Gastrocnemius medialis (tissue), 4 donors: ENCODE measurements at regions of chr9 and their contacts with region 1.

Region 1: GRCh38 chr9:37592108-37592951 is at the start of gene TOMM5:
- DNase-seq: peak; percentile 92
- ATAC-seq: peak; percentile 92 to 95
- H3K4me3 ChIP-seq: peak within 1 kb of the TSS; percentile 88 to 98 (median 92)
- H3K27ac ChIP-seq: peak within 1 kb of the TSS; percentile 89 to 94 (median 92)
- H3K4me1 ChIP-seq: peaks cover 22 to 29% of the 10 kb centered on the region in 2 donors
- H3K27me3 ChIP-seq: no peaks in the 10 kb centered on the region
- CTCF ChIP-seq: peak in 1 of 5 experiments; percentile 26
- POLR2A ChIP-seq: peak; percentile 88 to 95
- total RNA-seq, gene TOMM5: 75.3 to 137 (median 93.3) TPM

Region 2: DNA sequence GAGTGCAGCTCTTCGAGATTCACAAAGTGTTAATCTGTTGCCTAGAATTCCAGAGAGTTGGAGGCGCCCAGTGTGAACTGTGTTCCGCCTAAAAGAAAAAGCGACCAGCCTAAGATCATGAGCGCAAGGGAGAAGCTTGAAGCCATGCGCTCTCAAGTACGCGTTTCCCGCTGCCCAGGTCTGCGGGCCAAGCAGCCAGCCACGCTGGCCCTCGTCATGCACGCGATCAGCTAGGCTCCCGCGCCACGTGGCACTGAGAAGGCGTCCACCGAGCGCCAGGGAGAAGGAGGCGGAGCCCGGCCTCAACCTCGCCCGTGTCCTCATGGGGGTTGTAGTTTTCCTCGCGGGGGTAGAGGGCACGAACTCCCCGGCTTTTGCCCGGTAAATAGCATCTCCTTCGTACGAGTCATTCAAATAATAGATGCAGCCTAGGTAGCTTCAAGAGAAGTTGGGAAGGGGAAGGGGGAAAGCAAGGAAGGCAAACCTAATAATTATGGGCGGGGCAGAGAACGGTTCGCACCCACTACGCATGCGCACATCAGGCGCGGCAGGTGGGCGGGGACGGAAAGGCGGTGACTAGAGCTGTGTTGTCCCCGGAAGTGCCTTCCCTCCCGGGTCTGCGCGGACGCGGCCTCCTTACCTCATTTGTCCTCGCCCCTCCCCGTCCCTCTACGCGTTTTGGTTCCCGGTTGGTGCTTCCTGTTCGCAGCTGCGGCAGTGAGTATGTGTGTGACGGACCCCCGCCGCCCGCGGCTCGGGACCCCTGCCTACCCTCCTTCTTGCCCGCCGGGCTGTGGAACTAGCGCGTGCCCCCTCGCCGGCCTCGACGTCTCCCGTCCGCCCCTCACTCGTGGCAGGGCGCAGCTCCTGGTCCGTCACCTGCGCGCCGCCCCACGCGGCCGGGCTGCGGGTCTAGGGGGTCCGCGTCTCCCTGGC is 472.2 kb before region 1 on chr9 and contains the start of gene ZCCHC7:
- in situ Hi-C with region 1: loop called in 1 of 4 experiments (anchors 25 kb)
- intact Hi-C with region 1: no loop called
- DNase-seq: peak; percentile 93 to 94
- ATAC-seq: peak; percentile 96 to 97
- H3K4me3 ChIP-seq: peak within 1 kb of the TSS; percentile 89 to 100 (median 96)
- H3K27ac ChIP-seq: peak within 1 kb of the TSS; percentile 91 to 98 (median 97)
- H3K4me1 ChIP-seq: peaks cover 17 to 19% of the 10 kb centered on the region in 2 donors
- H3K27me3 ChIP-seq: no peaks in the 10 kb centered on the region
- CTCF ChIP-seq: no peak
- POLR2A ChIP-seq: peak; percentile 85 to 88
- total RNA-seq, gene ZCCHC7: 4.8 to 11.2 (median 6.9) TPM

Region 3: DNA sequence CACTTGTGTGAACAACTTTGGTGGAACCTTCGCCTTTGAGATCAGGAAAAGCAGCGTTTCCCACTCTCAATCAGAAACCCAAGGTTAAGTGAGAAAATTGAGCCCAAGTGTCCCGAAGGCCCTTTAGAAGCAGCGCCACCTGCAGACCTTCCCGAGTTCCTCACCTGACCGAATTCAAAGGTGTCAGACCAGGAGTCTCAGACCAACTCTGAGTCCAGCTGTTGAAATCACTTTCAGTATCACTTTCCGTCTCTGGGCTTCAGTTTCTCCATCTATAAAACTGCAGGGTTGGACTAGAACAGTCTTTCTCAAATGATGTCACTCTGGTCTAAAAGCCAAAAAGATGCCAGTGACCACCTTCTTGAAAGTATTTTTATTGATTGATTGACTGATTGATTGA is 201.6 kb before region 1 on chr9:
- in situ Hi-C with region 1: no loop called
- intact Hi-C with region 1: no loop called
- DNase-seq: no peak
- ATAC-seq: no peak
- H3K4me3 ChIP-seq: no peak overlapping the region
- H3K27ac ChIP-seq: no peak overlapping the region
- H3K4me1 ChIP-seq: no peaks in the 10 kb centered on the region
- H3K27me3 ChIP-seq: no peaks in the 10 kb centered on the region
- CTCF ChIP-seq: no peak
- POLR2A ChIP-seq: no peak

Region 4: DNA sequence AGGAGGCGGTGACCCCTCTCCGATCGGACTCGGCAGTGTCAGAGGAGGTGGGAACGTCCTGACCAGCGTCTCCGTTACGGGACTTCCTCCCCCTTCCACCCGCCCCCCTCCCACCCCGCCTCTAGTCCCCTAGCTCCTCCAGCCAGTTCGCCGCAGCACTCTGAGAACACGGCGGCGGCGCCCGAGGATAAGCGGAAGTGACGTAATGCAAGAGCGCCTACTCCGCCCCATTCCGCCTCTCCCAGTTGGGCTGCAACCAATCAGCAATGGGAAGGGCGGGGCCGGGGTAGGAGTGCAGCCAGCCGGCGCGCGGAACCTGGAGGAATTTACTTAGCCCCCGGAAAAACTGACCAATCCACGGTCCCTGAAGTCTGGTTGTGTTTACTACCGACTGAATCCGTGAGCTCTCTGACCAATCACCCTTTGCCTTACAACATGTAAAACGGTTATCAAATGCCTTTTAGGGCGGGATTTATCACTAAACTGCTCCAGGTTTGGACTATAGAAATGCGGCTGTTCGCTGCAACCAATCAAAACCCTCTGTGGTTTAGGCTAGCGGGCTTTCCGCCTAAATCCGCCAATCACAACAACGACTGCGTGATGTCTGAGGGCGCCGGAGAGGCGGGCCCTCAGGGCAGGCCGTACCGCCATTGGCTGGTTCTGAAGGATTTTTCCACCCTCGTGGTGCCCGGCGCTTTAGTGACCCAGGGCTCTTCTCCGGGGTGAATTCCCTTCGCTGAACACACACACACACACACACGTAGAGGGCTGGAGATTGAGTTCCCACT is 126.9 kb before region 1 on chr9 and contains the start of gene ZBTB5:
- in situ Hi-C with region 1: loop called in 2 of 4 experiments (anchors 10 kb)
- intact Hi-C with region 1: no loop called
- DNase-seq: peak; percentile 99
- ATAC-seq: peak; percentile 92 to 94
- H3K4me3 ChIP-seq: peak within 1 kb of the TSS; percentile 70 to 92 (median 90)
- H3K27ac ChIP-seq: peak within 1 kb of the TSS; percentile 91 to 100 (median 97)
- H3K4me1 ChIP-seq: peaks cover 26 to 27% of the 10 kb centered on the region in 2 donors
- H3K27me3 ChIP-seq: no peaks in the 10 kb centered on the region
- CTCF ChIP-seq: peak in 1 of 5 experiments; percentile 16
- POLR2A ChIP-seq: peak; percentile 84 to 94
- total RNA-seq, gene ZBTB5: 5.6 to 7.0 (median 6.7) TPM

Region 5: DNA sequence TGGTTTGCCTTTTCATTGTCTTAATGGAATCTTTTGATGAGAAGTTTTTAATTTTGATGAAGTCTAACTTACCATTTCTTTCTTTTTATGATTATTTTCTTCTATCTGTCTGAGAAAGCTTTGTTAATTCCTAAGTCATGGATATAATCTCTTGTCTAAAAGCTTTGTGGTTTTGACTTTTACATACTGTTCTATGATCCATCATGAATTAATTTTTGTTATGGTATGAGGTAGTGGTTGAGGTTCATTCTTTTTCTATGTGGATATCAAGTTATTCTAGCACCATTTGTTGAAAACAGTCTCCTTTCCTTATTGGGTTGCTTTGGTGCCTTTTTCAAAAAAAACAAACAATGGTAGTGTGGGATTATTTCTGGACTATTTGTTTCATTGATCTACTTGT is 36.5 kb before region 1 on chr9:
- in situ Hi-C with region 1: no loop called
- intact Hi-C with region 1: no loop called
- DNase-seq: no peak
- ATAC-seq: no peak
- H3K4me3 ChIP-seq: no peak overlapping the region
- H3K27ac ChIP-seq: no peak overlapping the region
- H3K4me1 ChIP-seq: peaks cover 10 to 16% of the 10 kb centered on the region in 2 donors
- H3K27me3 ChIP-seq: no peaks in the 10 kb centered on the region
- CTCF ChIP-seq: no peak
- POLR2A ChIP-seq: no peak

Region 6: GRCh38 chr9:37668116-37668601 is 75.8 kb after region 1 on chr9:
- in situ Hi-C with region 1: loop called in 2 of 4 experiments (anchors 10 kb)
- intact Hi-C with region 1: loop called (anchors 2 kb)
- DNase-seq: peak; percentile 80 to 81
- ATAC-seq: peak; percentile 94 to 97
- H3K4me3 ChIP-seq: peak overlapping the region; percentile 21 to 50 (median 32)
- H3K27ac ChIP-seq: peak overlapping the region; percentile 78 to 84 (median 80)
- H3K4me1 ChIP-seq: peaks cover 15 to 21% of the 10 kb centered on the region in 2 donors
- H3K27me3 ChIP-seq: no peaks in the 10 kb centered on the region
- CTCF ChIP-seq: peak in 4 of 5 experiments; percentile 11 to 47 (median 23)
- POLR2A ChIP-seq: no peak

Region 7: DNA sequence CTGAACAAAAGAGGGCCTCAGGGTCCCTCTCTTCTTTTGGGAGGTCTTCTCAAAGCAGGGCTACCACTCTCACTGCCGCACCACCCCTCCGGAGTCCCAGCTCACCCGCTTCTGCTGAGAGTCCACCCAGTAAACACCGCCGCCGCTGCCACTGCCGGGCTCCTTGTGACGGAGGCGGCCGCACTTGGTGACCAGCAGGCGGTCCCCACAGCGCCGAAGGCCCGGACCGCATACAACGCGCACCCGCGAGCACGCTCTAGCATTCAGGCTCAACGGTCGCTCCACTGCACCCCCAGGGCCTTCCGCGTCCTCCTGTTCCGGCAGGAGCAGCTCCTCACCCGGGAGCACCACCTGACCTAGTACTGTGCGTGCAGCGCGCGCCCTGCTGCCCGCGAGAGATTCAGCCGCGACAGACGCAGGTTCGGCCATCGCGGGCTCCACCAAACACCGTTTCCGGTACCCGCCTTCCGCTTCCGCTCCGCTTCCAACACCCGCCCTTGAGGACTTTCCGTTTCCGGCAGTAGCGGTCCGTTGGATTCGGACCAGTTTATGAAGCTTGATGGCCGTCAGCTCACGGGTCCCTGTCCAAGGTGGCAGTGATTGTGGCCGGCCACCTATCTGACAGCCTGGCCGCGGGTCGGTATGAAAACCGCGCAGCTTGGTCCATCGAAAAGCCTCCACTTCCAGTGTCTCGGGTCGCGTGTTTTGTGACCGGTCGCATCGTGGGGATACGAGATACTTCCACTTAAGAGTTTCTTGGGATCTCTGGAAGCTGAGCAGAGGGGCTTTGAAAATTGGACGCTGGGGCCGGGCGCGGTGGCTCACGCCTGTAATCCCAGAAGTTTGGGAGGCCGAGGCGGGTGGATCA is 192.5 kb after region 1 on chr9 and contains the start of gene EXOSC3:
- in situ Hi-C with region 1: loop called (anchors 10 to 25 kb)
- intact Hi-C with region 1: no loop called
- DNase-seq: peak; percentile 84 to 85
- ATAC-seq: peak; percentile 99
- H3K4me3 ChIP-seq: peak within 1 kb of the TSS; percentile 87 to 95 (median 94)
- H3K27ac ChIP-seq: peak within 1 kb of the TSS; percentile 77 to 89 (median 81)
- H3K4me1 ChIP-seq: peaks cover 15% of the 10 kb centered on the region in 2 donors
- H3K27me3 ChIP-seq: peaks cover 0 to 11% (median 0%) of the 10 kb centered on the region in 3 donors
- CTCF ChIP-seq: peak in 1 of 5 experiments; percentile 15
- POLR2A ChIP-seq: peak; percentile 13 to 63
- total RNA-seq, gene EXOSC3: 15.6 to 46.7 (median 17.8) TPM

Region 8: GRCh38 chr9:38068866-38069629 is 476.7 kb after region 1 on chr9 and contains the start of gene SHB:
- in situ Hi-C with region 1: loop called in 1 of 4 experiments (anchors 25 kb)
- intact Hi-C with region 1: no loop called
- DNase-seq: peak; percentile 70 to 76
- ATAC-seq: peak; percentile 71 to 72
- H3K4me3 ChIP-seq: peak within 1 kb of the TSS; percentile 85 to 99 (median 92)
- H3K27ac ChIP-seq: peak within 1 kb of the TSS; percentile 89 to 97 (median 94)
- H3K4me1 ChIP-seq: peaks cover 11 to 21% of the 10 kb centered on the region in 2 donors
- H3K27me3 ChIP-seq: no peaks in the 10 kb centered on the region
- CTCF ChIP-seq: peak in 4 of 5 experiments; percentile 29 to 47 (median 37)
- POLR2A ChIP-seq: peak; percentile 88 to 91
- total RNA-seq, gene SHB: 1.2 to 6.1 (median 4.6) TPM